ENCODE measurements at regions of chr5 and their contacts with region 1.

Region 1: GRCh38 chr5:145681686-145682085 is 153.5 kb downstream of the PRELID2 start:
- DNase-seq: no peak
- H3K4me3 ChIP-seq: no peak overlapping the region
- H3K27ac ChIP-seq: peak overlapping the region; percentile 53
- H3K4me1 ChIP-seq: peaks cover 24% of the 10 kb centered on the region
- H3K27me3 ChIP-seq: no peaks in the 10 kb centered on the region
- CTCF ChIP-seq: peak; percentile 77

Region 2: GRCh38 chr5:145568581-145568980 is 113.1 kb before region 1 on chr5:
- intact Hi-C with region 1: no loop called
- DNase-seq: no peak
- H3K4me3 ChIP-seq: no peak overlapping the region
- H3K27ac ChIP-seq: no peak overlapping the region
- H3K4me1 ChIP-seq: no peaks in the 10 kb centered on the region
- H3K27me3 ChIP-seq: no peaks in the 10 kb centered on the region
- CTCF ChIP-seq: no peak

Region 3: GRCh38 chr5:145825751-145826180 is 144.1 kb after region 1 on chr5:
- intact Hi-C with region 1: loop called (anchors 10 kb)
- DNase-seq: no peak
- H3K4me3 ChIP-seq: no peak overlapping the region
- H3K27ac ChIP-seq: no peak overlapping the region
- H3K4me1 ChIP-seq: peaks cover 14% of the 10 kb centered on the region
- H3K27me3 ChIP-seq: no peaks in the 10 kb centered on the region
- CTCF ChIP-seq: peak; percentile 80

Region 4: DNA sequence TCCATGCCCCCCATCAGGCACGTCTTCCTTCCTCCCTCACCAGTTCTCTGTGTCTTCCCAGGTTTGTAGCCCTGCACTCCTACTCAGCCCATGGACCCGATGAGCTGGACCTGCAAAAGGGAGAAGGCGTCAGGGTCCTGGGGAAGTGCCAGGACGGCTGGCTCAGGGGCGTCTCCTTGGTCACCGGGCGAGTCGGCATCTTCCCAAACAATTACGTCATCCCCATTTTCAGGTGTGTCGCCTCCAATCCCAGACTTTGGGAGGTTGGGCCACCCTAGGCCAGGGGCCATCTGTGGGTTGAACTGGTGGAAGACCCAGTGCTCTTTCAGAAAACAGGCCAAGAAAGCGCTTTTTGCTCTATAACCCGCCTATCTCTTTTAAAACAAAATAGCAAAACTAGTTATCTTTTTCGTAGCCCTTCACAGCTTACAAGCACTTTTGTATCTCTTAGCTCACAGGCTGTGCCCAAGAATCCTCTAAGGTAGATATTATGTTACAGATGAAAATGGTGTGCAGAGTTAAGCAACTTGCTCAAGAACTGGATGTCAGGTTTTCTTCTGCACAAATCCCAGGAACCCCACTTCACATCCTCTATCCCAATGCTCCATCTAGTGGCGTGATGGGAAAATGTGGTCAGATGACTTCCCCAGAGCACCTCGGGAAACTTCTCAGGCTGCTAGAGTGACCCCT is 367.5 kb after region 1 on chr5:
- intact Hi-C with region 1: loop called (anchors 10 kb)
- DNase-seq: no peak
- H3K4me3 ChIP-seq: no peak overlapping the region
- H3K27ac ChIP-seq: no peak overlapping the region
- H3K4me1 ChIP-seq: peaks cover 22% of the 10 kb centered on the region
- H3K27me3 ChIP-seq: no peaks in the 10 kb centered on the region
- CTCF ChIP-seq: peak; percentile 73

Region 5: GRCh38 chr5:146130440-146131045 is 448.9 kb after region 1 on chr5:
- intact Hi-C with region 1: loop called (anchors 10 kb)
- DNase-seq: no peak
- H3K4me3 ChIP-seq: no peak overlapping the region
- H3K27ac ChIP-seq: no peak overlapping the region
- H3K4me1 ChIP-seq: no peaks in the 10 kb centered on the region
- H3K27me3 ChIP-seq: no peaks in the 10 kb centered on the region
- CTCF ChIP-seq: peak; percentile 68